ENCODE measurements at regions of chr7 and their contacts with region 1.

Region 1: GRCh38 chr7:100428199-100428966 is at the start of gene ZCWPW1:
- DNase-seq: peak; percentile 91
- ATAC-seq: peak; percentile 67
- H3K4me3 ChIP-seq: peak within 1 kb of the TSS; percentile 75 to 87 (median 83)
- H3K27ac ChIP-seq: peak within 1 kb of the TSS; percentile 98
- H3K4me1 ChIP-seq: peaks cover 37% of the 10 kb centered on the region
- H3K27me3 ChIP-seq: no peaks in the 10 kb centered on the region; a peak in 1 of 5 replicates
- CTCF ChIP-seq: peak; percentile 25
- EP300 ChIP-seq: no peak; a peak in 1 of 4 replicates
- POLR2A ChIP-seq: peak in 1 of 2 experiments; percentile 98; a peak in 2 of 4 replicates
- RAD21 ChIP-seq: peak; percentile 15; the same call in 1 of the 2 replicates
- total RNA-seq, gene ZCWPW1: 2.5 and 2.6 TPM in 2 replicates

Region 2: DNA sequence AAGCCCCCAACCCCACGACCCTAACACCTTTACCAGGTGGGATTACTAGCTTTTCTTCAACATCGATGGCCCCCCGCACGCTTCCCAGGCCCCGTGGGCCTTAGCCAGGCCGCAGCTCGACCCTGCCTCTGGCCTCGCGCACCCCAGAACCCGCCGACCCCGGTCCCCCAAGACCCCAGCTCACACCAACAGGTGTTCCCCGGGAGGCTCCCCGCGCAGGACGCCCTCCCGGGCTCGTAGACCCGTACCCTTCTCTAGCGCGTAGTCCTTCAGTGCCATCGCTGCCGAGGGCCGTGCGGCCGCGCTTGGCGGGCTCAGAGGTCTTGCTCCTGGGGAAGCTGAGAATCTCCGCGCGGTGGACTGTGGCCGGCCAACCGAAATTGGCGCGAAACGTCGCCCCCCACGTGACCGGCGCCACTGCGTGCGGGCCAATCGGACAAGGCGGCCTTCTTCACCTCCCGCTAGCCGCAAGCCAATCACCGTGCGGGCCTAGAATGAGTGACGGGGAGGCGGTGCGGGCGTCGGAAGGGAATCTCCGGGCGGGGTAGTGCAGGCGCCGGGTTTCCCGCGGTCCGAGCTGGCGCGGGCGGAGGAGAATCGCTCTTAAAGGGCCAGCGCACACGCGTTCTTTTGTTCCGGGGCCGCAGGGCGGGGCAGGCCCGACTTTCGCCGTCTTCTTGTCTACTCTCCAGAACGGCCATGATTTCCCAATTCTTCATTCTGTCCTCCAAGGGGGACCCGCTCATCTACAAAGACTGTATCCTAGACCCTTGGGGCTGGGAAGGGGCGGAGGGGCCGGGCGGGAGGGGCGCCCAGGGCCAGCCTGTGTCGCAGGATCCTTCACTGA is 327.1 kb before region 1 on chr7 and contains the starts of genes AP4M1 and MCM7:
- CTCF ChIA-PET with region 1: no interaction called
- POLR2A ChIA-PET with region 1: interaction called, 14 read pairs
- in situ Hi-C with region 1: no loop called
- intact Hi-C with region 1: no loop called
- DNase-seq: peak; percentile 97
- ATAC-seq: peak; percentile 90
- H3K4me3 ChIP-seq: peak within 1 kb of the TSS; percentile 85 to 99 (median 86)
- H3K27ac ChIP-seq: peak within 1 kb of the TSS; percentile 95
- H3K4me1 ChIP-seq: peaks cover 22% of the 10 kb centered on the region
- H3K27me3 ChIP-seq: no peaks in the 10 kb centered on the region
- CTCF ChIP-seq: no peak
- EP300 ChIP-seq: peak in 1 of 2 experiments; percentile 23; a peak in 2 of 4 replicates
- POLR2A ChIP-seq: peak; percentile 57 to 72; a peak in 3 of 4 replicates
- RAD21 ChIP-seq: no peak
- total RNA-seq, gene AP4M1: 8.2 and 9.7 TPM in 2 replicates
- total RNA-seq, gene MCM7: 214 and 229 TPM in 2 replicates

Region 3: GRCh38 chr7:100380196-100380595 is 48.2 kb before region 1 on chr7:
- CTCF ChIA-PET with region 1: no interaction called
- POLR2A ChIA-PET with region 1: interaction called, 28 read pairs
- in situ Hi-C with region 1: no loop called
- intact Hi-C with region 1: no loop called
- DNase-seq: no peak
- ATAC-seq: no peak
- H3K4me3 ChIP-seq: no peak overlapping the region
- H3K27ac ChIP-seq: no peak overlapping the region
- H3K4me1 ChIP-seq: peaks cover 12% of the 10 kb centered on the region
- H3K27me3 ChIP-seq: peaks cover 0 to 9% of the 10 kb centered on the region in 2 experiments; a peak in 1 of 5 replicates
- CTCF ChIP-seq: no peak
- EP300 ChIP-seq: no peak
- POLR2A ChIP-seq: no peak
- RAD21 ChIP-seq: no peak

Region 4: DNA sequence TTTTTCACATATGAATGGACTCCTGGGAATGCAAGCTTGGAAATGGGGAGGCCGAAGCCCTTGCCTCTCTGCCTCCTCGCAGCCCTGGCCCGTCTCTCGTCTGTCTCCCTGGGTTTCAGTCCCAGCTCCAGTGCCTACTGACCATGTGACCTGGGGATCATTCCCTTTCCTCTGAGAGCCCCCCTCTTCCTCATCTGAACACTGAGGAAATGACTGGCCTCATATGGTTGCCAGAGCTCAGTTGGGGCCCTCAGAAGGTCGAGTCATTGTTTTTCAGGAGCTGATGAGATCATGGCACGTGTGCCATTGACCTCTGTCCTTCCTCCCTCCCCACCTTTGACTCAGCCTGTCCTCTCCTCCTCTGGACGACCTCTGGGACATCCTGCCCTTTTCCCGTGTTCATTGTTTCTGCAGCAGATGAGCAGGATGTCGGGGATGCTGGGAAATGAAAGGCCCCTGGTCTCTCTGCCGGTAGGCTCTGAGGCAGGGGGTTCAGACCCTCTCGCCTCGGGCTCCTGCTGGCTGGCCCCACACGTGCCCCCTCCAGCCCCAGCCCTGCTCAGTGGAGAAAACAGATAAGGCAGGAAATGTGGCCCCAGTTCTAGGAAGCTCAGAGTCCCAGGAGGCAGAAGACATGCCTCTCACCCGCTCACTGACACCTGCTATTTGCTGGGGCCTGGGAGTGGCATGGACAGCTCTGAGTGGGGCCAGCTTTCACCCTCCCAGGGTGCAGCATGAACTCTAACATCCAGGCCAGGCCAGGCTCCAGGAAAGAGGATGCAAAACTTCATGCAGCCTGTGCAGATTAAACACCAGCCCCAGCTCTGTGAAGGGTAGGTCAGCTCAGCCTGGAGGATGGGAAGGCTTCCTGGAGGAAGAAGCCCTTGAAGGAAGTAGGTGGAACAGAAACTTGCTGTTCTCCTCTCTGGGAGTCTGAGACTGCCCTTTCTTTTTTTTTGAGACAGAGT is 16.2 kb after region 1 on chr7:
- CTCF ChIA-PET with region 1: no interaction called
- POLR2A ChIA-PET with region 1: interaction called, 199 read pairs
- in situ Hi-C with region 1: no loop called
- intact Hi-C with region 1: loop called (anchors 2 kb)
- DNase-seq: peak; percentile 96
- ATAC-seq: peak; percentile 85
- H3K4me3 ChIP-seq: peak overlapping the region in 2 of 3 experiments; percentile 27 to 51; a peak in 4 of 6 replicates
- H3K27ac ChIP-seq: peak overlapping the region; percentile 94
- H3K4me1 ChIP-seq: peaks cover 53% of the 10 kb centered on the region
- H3K27me3 ChIP-seq: no peaks in the 10 kb centered on the region
- CTCF ChIP-seq: no peak
- EP300 ChIP-seq: peak in 1 of 2 experiments; percentile 82; a peak in 3 of 4 replicates
- POLR2A ChIP-seq: peak; percentile 53 to 63; a peak in 2 of 4 replicates
- RAD21 ChIP-seq: no peak

Region 5: DNA sequence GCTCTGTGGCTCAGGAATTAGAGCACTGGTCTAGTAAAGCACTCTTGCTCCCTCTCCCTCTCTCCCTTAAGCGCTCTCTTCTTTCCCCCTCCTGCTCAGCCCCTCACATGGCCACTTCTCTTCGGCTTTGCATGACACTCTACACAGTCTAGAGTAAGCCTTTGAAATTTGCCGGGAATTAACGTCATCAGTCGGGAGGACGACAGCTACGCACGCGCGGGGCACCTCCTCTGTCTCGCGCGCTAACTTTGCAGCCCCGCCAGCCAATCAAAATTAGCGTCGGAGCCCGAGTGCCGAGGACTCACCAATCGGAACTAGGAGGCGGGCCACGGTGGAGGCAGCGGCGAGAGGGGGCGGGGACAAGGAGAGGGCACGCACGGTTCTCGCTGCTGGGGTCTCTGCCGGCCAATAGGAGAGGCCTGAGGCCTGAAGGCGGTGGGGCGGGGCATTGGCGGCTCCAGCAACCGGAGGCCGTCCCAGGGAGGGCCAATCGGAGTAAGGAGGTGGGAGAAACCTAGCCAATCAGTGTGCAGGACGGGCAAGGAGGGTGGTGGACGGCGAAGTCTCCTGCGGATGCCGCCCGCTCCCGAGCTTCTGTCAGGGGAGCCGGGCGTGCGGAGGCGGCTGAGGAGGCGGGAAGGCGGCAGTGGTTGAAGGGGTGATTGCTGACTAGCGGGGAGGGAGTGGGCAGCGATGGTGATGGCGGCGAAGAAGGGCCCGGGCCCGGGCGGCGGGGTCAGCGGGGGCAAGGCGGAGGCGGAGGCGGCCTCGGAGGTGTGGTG is 110.5 kb after region 1 on chr7 and contains the start of gene AGFG2:
- CTCF ChIA-PET with region 1: no interaction called
- POLR2A ChIA-PET with region 1: interaction called, 19 read pairs
- in situ Hi-C with region 1: no loop called
- intact Hi-C with region 1: no loop called
- DNase-seq: peak; percentile 99
- ATAC-seq: peak; percentile 94
- H3K4me3 ChIP-seq: peak within 1 kb of the TSS; percentile 93 to 98 (median 96)
- H3K27ac ChIP-seq: peak within 1 kb of the TSS; percentile 96
- H3K4me1 ChIP-seq: peaks cover 55% of the 10 kb centered on the region
- H3K27me3 ChIP-seq: no peaks in the 10 kb centered on the region; a peak in 1 of 5 replicates
- CTCF ChIP-seq: no peak
- EP300 ChIP-seq: no peak
- POLR2A ChIP-seq: peak in 1 of 2 experiments; percentile 93; a peak in 3 of 4 replicates
- RAD21 ChIP-seq: peak; percentile 28; the same call in 1 of the 2 replicates
- total RNA-seq, gene AGFG2: 117 and 132 TPM in 2 replicates

Region 6: GRCh38 chr7:100577103-100577906 is 148.9 kb after region 1 on chr7:
- CTCF ChIA-PET with region 1: no interaction called
- POLR2A ChIA-PET with region 1: no interaction called
- in situ Hi-C with region 1: no loop called
- intact Hi-C with region 1: no loop called
- DNase-seq: no peak
- ATAC-seq: no peak
- H3K4me3 ChIP-seq: no peak overlapping the region
- H3K27ac ChIP-seq: no peak overlapping the region
- H3K4me1 ChIP-seq: peaks cover 9% of the 10 kb centered on the region
- H3K27me3 ChIP-seq: no peaks in the 10 kb centered on the region
- CTCF ChIP-seq: no peak
- EP300 ChIP-seq: no peak
- POLR2A ChIP-seq: no peak
- RAD21 ChIP-seq: no peak

Region 7: DNA sequence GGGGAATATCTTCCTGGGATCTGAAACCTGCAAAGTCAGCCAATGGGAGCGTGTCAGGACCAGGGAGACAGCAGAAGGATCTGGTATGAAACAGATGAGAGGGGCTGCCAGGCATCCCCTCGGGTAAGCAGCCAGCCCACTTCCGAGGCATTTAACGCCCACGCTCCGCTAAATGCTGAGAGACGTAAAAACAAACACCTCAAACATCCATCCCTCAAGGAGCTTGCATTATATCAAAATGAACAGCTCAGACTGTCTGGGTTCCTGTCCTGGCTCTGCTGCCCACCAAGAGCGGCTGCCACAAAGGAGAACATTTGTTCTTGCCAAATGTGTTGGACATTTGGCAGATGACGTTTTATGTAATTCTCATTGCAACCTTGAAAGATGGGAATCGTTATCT is 691.5 kb after region 1 on chr7:
- CTCF ChIA-PET with region 1: no interaction called
- POLR2A ChIA-PET with region 1: no interaction called
- in situ Hi-C with region 1: no loop called
- intact Hi-C with region 1: no loop called
- DNase-seq: no peak
- ATAC-seq: no peak
- H3K4me3 ChIP-seq: no peak overlapping the region
- H3K27ac ChIP-seq: no peak overlapping the region
- H3K4me1 ChIP-seq: peaks cover 78% of the 10 kb centered on the region
- H3K27me3 ChIP-seq: no peaks in the 10 kb centered on the region
- CTCF ChIP-seq: no peak
- EP300 ChIP-seq: no peak
- POLR2A ChIP-seq: no peak
- RAD21 ChIP-seq: no peak

Measured in HepG2 (cell line).